ENCODE measurements at regions of chr12 and their contacts with region 1.

Region 1: DNA sequence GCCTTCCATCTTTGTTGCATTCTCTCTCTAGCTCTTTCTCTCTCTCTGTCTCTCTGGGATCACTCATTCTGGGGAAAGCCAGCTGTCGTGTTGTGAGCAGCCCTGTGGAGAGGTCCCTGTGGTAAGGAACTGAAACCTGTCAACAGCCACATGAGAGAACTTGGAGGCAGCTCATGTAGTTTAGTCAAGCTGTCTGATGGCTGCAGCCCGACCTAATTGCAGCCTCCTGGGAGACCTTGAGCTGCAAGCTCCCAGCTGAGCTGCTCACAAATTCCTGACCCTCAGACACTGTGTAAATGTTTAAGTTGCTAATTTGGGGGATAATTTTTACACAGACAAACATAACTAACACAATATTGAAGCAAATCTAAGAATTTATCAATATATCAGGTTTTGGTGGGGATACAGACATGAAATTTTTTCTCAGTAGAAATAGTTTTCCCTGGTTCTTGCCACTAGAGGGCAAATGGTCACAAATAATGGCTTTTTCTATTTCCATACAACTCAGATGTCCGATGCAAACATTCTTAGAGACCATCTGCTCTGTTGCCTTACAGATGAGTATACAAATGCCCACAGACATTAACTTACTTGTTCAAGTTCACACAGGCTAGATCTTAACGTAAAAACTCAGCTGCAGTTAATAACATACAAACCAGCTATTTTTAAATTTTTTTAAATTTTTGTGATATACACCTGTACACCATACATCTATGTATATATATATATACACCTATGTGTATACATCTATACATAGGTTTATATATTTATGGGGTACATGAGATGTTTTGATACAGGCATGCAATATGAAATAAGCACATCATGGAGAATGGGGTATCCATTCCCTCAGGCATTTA is 15.5 kb upstream of the KRR1 start:
- DNase-seq: no peak
- ATAC-seq: peak in 1 of 2 donors; percentile 36
- H3K4me3 ChIP-seq: no peak overlapping the region
- H3K27ac ChIP-seq: no peak overlapping the region
- H3K4me1 ChIP-seq: no peaks in the 10 kb centered on the region
- H3K27me3 ChIP-seq: no peaks in the 10 kb centered on the region
- CTCF ChIP-seq: peak; percentile 69

Region 2: GRCh38 chr12:76031537-76032073 is 504.7 kb after region 1 on chr12 and contains the start of gene PHLDA1:
- intact Hi-C with region 1: loop called (anchors 10 kb)
- DNase-seq: peak; percentile 94
- ATAC-seq: peak; percentile 92 to 95
- H3K4me3 ChIP-seq: peak within 1 kb of the TSS; percentile 80
- H3K27ac ChIP-seq: peak within 1 kb of the TSS; percentile 97
- H3K4me1 ChIP-seq: peaks cover 26% of the 10 kb centered on the region
- H3K27me3 ChIP-seq: no peaks in the 10 kb centered on the region
- CTCF ChIP-seq: peak; percentile 67
- total RNA-seq, gene PHLDA1: 12.2 TPM

Measured in lower lobe of right lung (tissue), 2 donors.